BJ (cell line): ENCODE measurements at regions of chr12 and their contacts with region 1.

Region 1: GRCh38 chr12:48618541-48618940 is 48.7 kb upstream of the LALBA start:
- DNase-seq: no peak
- H3K4me3 ChIP-seq: no peak overlapping the region
- H3K27me3 ChIP-seq: no peaks in the 10 kb centered on the region; the same call in 1 of the 2 replicates
- CTCF ChIP-seq: peak; percentile 96

Region 2: GRCh38 chr12:48512855-48513254 is 105.7 kb before region 1 on chr12:
- CTCF ChIA-PET with region 1: no interaction called
- POLR2A ChIA-PET with region 1: no interaction called
- DNase-seq: no peak
- H3K4me3 ChIP-seq: no peak overlapping the region
- H3K27me3 ChIP-seq: no peaks in the 10 kb centered on the region
- CTCF ChIP-seq: no peak

Region 3: DNA sequence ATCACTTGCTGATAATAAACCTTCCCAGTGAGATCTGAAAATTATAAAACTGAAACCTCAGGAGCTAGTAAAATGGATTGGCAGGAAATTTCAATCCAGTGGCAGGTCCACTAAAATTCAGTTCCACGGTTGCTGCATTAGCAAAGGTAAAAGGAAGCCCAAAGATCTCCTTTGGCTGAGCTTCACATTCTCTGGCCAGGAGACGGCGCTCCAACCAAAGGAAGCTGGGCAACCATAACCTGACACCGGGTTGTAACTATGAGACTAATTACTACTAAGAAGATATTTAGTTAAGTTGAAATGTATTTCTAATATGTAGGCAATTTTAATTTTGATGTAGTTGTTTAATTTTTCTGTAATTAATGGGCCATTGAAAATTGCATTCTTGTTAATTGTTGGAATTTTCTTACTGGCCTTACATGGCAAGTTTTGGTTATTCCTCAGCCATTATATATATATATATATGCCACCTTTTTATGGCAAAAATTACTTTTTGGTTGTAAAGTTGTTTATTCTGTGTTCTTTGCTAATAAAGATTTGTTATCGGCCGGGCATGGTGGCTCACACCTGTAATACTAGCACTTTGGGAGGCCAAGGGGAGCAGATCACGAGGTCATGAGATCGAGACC is 76.1 kb before region 1 on chr12:
- CTCF ChIA-PET with region 1: interaction called, 116 read pairs
- POLR2A ChIA-PET with region 1: no interaction called
- DNase-seq: no peak
- H3K4me3 ChIP-seq: no peak overlapping the region
- H3K27me3 ChIP-seq: no peaks in the 10 kb centered on the region; the same call in 1 of the 2 replicates
- CTCF ChIP-seq: peak; percentile 71

Region 4: GRCh38 chr12:48601013-48601756 is 17.4 kb before region 1 on chr12:
- CTCF ChIA-PET with region 1: interaction called, 29 read pairs
- POLR2A ChIA-PET with region 1: no interaction called
- DNase-seq: no peak
- H3K4me3 ChIP-seq: no peak overlapping the region
- H3K27me3 ChIP-seq: no peaks in the 10 kb centered on the region; the same call in 1 of the 2 replicates
- CTCF ChIP-seq: no peak

Region 5: DNA sequence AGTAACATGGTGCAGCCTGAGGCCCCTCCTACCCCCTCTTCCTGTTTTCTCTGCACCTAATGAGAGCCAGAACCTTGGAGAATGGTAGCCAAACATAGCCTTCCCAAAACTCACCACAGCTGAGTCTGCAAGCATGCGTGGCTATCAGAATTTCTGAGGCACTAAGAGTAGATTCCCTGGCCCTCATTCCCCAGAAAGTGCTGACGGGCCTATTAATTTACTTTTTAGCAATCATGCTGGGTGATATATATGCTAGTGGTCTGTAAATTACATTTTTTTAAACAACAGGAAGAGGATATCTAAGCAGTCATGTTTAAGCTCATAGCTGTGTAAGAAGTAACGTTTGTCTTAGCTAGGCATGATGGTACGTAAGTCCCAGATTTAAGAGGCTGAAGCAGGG is 33.1 kb after region 1 on chr12:
- CTCF ChIA-PET with region 1: no interaction called
- POLR2A ChIA-PET with region 1: no interaction called
- DNase-seq: no peak
- H3K4me3 ChIP-seq: no peak overlapping the region
- H3K27me3 ChIP-seq: no peaks in the 10 kb centered on the region
- CTCF ChIP-seq: no peak